ENCODE measurements at regions of chr11 and their contacts with region 1.

Region 1: GRCh38 chr11:61281581-61282250 is 13.4 kb downstream of the VWCE start:
- DNase-seq: peak; percentile 38
- ATAC-seq: peak; percentile 77
- H3K4me3 Mint-ChIP-seq: no peak overlapping the region
- H3K27ac Mint-ChIP-seq: no peak overlapping the region
- H3K4me1 Mint-ChIP-seq: no peaks in the 10 kb centered on the region
- H3K27me3 Mint-ChIP-seq: no peaks in the 10 kb centered on the region

Region 2: DNA sequence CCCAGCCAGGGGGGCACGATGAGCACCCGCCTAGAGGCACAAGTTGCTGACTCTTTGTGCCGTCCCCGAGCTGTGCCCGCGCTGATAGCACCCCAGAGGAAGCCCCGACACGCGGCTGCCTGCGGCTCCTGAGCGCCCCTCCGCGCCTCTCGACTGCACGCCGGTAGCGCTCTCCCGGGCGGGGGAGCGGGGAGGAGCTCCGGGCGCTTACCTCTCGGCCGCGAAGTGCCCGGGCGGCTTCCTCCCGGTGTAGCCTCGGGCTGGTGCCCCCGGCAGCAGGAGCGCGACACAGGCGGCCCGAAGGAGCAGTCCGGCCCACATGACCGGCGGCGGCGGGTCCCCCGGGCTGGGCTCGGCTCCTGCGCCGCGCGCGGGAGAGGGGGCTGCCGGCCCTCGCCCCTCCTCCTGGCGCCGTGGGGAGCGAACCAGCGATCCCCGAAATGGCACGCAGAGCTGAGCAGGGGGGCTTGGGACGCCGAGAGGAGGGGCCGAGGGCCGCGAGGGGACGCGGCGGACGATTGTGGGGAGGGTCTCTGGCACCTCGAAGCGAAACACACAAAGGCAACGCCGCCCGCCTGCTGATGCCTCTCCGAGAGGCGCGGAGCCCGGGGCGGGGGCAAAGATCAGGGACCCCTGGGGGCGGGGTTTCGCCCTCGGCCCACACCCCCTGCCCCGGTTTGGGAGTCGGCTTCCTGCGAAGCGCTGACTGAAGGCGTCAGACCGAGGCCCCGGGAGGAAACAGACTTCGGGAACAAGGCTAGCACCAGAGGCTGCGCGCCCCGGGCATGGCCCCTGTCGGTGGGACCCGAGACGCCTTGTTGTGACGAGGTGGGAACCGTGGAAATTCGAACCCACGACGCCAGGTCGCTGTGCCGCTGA is 13.2 kb after region 1 on chr11 and contains the start of gene VWCE:
- CTCF ChIA-PET with region 1: interaction called, 10 read pairs
- POLR2A ChIA-PET with region 1: interaction called, 3 read pairs
- DNase-seq: peak; percentile 84
- ATAC-seq: peak; percentile 87
- H3K4me3 Mint-ChIP-seq: peak within 1 kb of the TSS; percentile 79
- H3K27ac Mint-ChIP-seq: peak within 1 kb of the TSS; percentile 79
- H3K4me1 Mint-ChIP-seq: peaks cover 48% of the 10 kb centered on the region
- H3K27me3 Mint-ChIP-seq: no peaks in the 10 kb centered on the region
- total RNA-seq, gene VWCE: 2.2 to 3.3 TPM

Measured in activated CD8-positive, alpha-beta T cell treated with anti-CD3 and anti-CD28 coated beads, Interleukin-2, amount 10 ng/mL, durations not matched to agents 7 days and 5 days (primary cell).